Naive thymus-derived CD4-positive, alpha-beta T cell (primary cell): ENCODE measurements at regions of chr2 and their contacts with region 1.

Region 1: GRCh38 chr2:54570925-54571694 is 115.0 kb downstream of the SPTBN1 start:
- DNase-seq: peak in 8 of 9 donors; percentile 61 to 84 (median 68)
- ATAC-seq: peak; percentile 24
- H3K4me3 ChIP-seq: peak overlapping the region; percentile 58
- H3K4me3 Mint-ChIP-seq: peak overlapping the region; percentile 72 to 94 (median 88)
- H3K27ac ChIP-seq: peak overlapping the region; percentile 95
- H3K27ac Mint-ChIP-seq: peak overlapping the region; percentile 90 to 99 (median 97)
- H3K4me1 ChIP-seq: peaks cover 76 to 91% of the 10 kb centered on the region in 2 donors
- H3K4me1 Mint-ChIP-seq: peaks cover 68 to 100% (median 93%) of the 10 kb centered on the region in 7 donors
- H3K27me3 ChIP-seq: no peaks in the 10 kb centered on the region
- H3K27me3 Mint-ChIP-seq: no peaks in the 10 kb centered on the region

Region 2: DNA sequence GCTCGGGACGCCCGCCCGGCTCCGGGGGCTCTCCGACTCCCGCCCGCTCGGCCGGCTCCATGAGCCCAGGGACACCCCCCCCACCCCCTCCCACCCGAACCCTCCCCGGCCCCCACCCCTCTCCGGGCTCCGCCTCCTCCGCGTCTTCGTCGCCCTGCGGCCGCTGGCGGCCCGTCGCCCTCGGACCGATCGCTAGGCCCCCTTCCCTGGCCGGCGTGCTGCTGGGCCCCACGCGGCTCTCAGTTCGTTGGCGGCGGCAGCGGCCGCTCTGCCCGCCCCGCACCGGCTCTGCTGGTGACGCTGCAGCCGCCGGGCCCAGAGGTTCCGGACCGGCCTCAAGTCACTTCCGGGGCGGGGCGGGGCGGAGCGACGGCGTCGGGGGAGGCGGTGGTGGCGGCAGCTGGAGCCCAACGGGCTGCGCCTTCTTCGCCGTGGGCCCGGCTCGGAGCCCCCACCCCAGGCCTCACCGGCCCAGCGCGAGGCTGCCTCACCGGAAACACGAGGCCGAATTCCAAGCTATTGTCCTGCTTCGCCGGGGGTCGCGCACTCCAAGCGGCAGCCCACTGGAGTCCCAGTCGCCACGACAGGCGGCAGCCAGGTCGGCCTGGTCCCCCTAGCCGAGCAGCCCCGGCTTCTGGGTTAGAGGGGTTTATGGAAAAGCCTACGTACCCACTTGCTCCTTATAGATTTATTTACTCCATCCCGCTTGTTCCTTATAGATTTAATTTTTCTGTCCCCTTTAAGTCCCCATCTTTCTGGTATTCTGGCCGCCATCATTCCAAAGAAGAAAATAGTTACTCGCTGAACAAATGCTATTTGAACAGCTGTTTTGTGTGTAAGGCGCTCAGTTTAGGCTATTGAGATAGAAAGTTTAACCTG is 600.1 kb before region 1 on chr2 and contains the start of gene PSME4:
- CTCF ChIA-PET with region 1: no interaction called
- POLR2A ChIA-PET with region 1: no interaction called
- intact Hi-C with region 1: loop called in 1 of 2 experiments (anchors 5 kb)
- DNase-seq: peak; percentile 80 to 95 (median 90)
- ATAC-seq: peak; percentile 97
- H3K4me3 ChIP-seq: peak within 1 kb of the TSS; percentile 84
- H3K4me3 Mint-ChIP-seq: peak within 1 kb of the TSS; percentile 89 to 100 (median 96)
- H3K27ac ChIP-seq: peak within 1 kb of the TSS; percentile 93
- H3K27ac Mint-ChIP-seq: peak within 1 kb of the TSS; percentile 91 to 99 (median 95)
- H3K4me1 ChIP-seq: peaks cover 17 to 21% of the 10 kb centered on the region in 2 donors
- H3K4me1 Mint-ChIP-seq: peaks cover 37 to 65% (median 54%) of the 10 kb centered on the region in 7 donors
- H3K27me3 ChIP-seq: no peaks in the 10 kb centered on the region
- H3K27me3 Mint-ChIP-seq: no peaks in the 10 kb centered on the region
- total RNA-seq, gene PSME4: 48.8 to 80.1 (median 54.4) TPM

Region 3: DNA sequence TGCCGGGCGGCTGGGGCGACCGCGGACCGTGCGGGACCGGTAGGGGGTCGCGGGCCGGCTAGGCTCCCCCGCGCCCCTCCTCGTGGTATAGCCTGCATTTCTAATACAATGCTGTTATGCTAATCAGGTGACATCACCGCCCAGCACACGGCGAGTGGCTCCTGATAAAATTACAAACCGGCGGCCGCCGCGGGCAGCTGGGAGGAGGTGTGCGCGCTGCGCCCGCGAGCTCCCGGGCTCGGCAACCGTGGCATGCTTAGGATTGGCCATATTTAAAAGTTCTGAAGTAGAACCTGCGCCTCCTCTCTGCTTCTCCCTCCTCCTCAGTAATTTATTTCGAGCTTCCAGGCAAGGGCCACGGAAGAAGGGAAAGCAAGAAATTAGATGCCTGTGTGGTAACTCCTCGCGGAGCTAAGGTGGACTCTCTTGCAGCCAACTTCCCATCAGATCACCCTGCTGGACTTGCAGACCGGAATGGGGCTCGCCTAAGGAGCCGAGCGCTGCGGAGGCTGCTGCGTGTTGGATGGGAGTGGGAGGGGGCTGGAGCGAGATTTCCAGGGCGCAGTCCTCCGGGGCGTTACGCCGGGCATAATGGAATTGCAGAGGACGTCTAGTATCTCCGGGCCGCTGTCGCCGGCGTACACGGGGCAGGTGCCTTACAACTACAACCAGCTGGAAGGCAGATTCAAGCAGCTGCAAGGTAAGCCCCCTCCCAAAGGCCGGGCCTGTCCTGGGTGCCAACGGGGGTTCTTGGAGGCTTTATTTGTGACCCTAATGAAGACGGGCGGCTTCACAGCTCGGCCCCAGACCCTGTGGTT is 12.7 kb before region 1 on chr2:
- CTCF ChIA-PET with region 1: interaction called, 23 read pairs
- POLR2A ChIA-PET with region 1: interaction called, 276 read pairs
- intact Hi-C with region 1: loop called (anchors 1 kb)
- DNase-seq: peak; percentile 48 to 75 (median 64)
- ATAC-seq: peak; percentile 82
- H3K4me3 ChIP-seq: peak overlapping the region; percentile 94
- H3K4me3 Mint-ChIP-seq: peak overlapping the region; percentile 86 to 100 (median 98)
- H3K27ac ChIP-seq: peak overlapping the region; percentile 86
- H3K27ac Mint-ChIP-seq: peak overlapping the region; percentile 90 to 98 (median 96)
- H3K4me1 ChIP-seq: peaks cover 10 to 11% of the 10 kb centered on the region in 2 donors
- H3K4me1 Mint-ChIP-seq: peaks cover 29 to 65% (median 59%) of the 10 kb centered on the region in 7 donors
- H3K27me3 ChIP-seq: no peaks in the 10 kb centered on the region
- H3K27me3 Mint-ChIP-seq: no peaks in the 10 kb centered on the region

Region 4: GRCh38 chr2:54597153-54597848 is 26.2 kb after region 1 on chr2:
- CTCF ChIA-PET with region 1: interaction called, 5 read pairs
- POLR2A ChIA-PET with region 1: interaction called, 223 read pairs
- intact Hi-C with region 1: loop called (anchors 1 kb)
- DNase-seq: no peak
- ATAC-seq: peak; percentile 39
- H3K4me3 ChIP-seq: peak overlapping the region; percentile 16
- H3K4me3 Mint-ChIP-seq: peak overlapping the region; percentile 79 to 93 (median 86)
- H3K27ac ChIP-seq: peak overlapping the region; percentile 79
- H3K27ac Mint-ChIP-seq: peak overlapping the region; percentile 86 to 98 (median 97)
- H3K4me1 ChIP-seq: peaks cover 41 to 90% of the 10 kb centered on the region in 2 donors
- H3K4me1 Mint-ChIP-seq: peaks cover 59 to 100% (median 97%) of the 10 kb centered on the region in 7 donors
- H3K27me3 ChIP-seq: no peaks in the 10 kb centered on the region
- H3K27me3 Mint-ChIP-seq: no peaks in the 10 kb centered on the region

Region 5: GRCh38 chr2:54618646-54619565 is 47.8 kb after region 1 on chr2:
- CTCF ChIA-PET with region 1: interaction called, 4 read pairs
- POLR2A ChIA-PET with region 1: interaction called, 5 read pairs
- intact Hi-C with region 1: loop called in 1 of 2 experiments (anchors 1 kb)
- DNase-seq: peak in 1 of 9 donors; percentile 32
- ATAC-seq: no peak
- H3K4me3 ChIP-seq: no peak overlapping the region
- H3K4me3 Mint-ChIP-seq: peak overlapping the region in 8 of 10 donors; percentile 8 to 76 (median 47)
- H3K27ac ChIP-seq: peak overlapping the region; percentile 25
- H3K27ac Mint-ChIP-seq: peak overlapping the region; percentile 25 to 88 (median 79)
- H3K4me1 ChIP-seq: peaks cover 0 to 11% of the 10 kb centered on the region in 2 donors
- H3K4me1 Mint-ChIP-seq: peaks cover 19 to 65% (median 45%) of the 10 kb centered on the region in 7 donors
- H3K27me3 ChIP-seq: no peaks in the 10 kb centered on the region
- H3K27me3 Mint-ChIP-seq: no peaks in the 10 kb centered on the region

Region 6: DNA sequence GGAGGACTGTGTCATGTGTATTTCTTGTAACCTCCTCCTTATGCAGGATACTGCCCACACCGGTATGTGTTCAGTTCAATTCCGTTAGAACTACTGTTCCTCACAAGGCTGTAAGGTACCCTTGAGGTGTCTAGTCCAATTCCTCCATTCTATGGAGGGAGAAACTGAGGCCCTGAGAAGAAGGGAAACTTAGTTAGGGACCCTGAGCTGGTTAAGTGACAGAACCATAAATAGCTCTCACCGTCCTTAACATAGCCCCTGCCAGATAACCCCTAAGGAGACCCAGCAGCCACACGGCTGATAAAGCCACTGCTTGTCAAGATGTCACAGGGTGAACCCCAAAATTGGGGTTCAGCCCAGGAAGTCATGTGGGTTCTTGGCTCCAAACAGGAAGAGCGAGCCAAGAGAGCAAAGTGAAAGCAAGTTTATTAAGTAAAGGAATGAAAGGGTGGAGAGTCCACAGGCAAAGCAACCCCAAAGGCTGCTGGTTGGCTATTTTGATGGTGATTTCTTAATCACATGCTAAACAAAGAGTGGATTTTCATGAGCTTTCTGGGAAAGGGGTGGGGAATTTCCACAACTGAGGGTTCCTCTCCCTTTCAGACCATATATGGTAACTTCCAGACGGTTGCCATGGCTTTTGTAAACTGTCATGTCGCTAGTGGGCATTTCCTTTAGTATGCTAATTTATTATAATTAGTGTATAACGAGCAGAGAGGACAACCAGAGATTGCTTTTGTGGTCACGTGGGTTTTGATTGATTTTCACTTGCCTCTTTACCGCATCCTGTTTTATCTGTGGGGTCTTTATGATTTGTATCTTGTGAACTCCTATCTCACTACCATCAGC is 562.6 kb after region 1 on chr2:
- CTCF ChIA-PET with region 1: no interaction called
- POLR2A ChIA-PET with region 1: no interaction called
- intact Hi-C with region 1: loop called in 1 of 2 experiments (anchors 10 kb)
- DNase-seq: peak; percentile 17 to 78 (median 52)
- ATAC-seq: peak; percentile 91
- H3K4me3 ChIP-seq: peak overlapping the region; percentile 55
- H3K4me3 Mint-ChIP-seq: peak overlapping the region; percentile 83 to 94 (median 88)
- H3K27ac ChIP-seq: peak overlapping the region; percentile 76
- H3K27ac Mint-ChIP-seq: peak overlapping the region; percentile 91 to 98 (median 97)
- H3K4me1 ChIP-seq: peaks cover 14 to 22% of the 10 kb centered on the region in 2 donors
- H3K4me1 Mint-ChIP-seq: peaks cover 19 to 49% (median 39%) of the 10 kb centered on the region in 7 donors
- H3K27me3 ChIP-seq: no peaks in the 10 kb centered on the region
- H3K27me3 Mint-ChIP-seq: no peaks in the 10 kb centered on the region

Region 7: DNA sequence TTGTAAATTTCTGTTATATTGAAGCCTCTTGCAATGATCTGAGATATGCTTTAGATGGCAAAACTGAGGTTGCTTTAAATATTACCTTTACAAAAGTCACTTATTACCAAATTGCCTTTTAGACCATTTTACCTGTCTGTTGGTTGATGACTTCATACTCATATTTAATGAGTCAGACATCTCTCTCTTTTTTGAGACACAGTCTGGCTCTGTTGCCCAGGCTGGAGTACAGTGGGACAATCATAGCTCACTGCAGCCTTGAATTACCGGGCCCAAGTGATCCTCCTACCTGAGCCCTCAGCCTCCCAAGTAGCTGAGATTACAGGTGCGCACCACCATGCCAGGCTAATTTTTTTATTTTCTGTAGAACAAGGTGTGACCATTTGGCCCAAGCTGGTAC is 1057.8 kb after region 1 on chr2:
- CTCF ChIA-PET with region 1: no interaction called
- POLR2A ChIA-PET with region 1: no interaction called
- intact Hi-C with region 1: no loop called
- DNase-seq: no peak
- ATAC-seq: no peak
- H3K4me3 ChIP-seq: no peak overlapping the region
- H3K4me3 Mint-ChIP-seq: no peak overlapping the region
- H3K27ac ChIP-seq: no peak overlapping the region
- H3K27ac Mint-ChIP-seq: peak overlapping the region in 3 of 9 donors; percentile 3 to 10 (median 9)
- H3K4me1 ChIP-seq: peaks cover under 1 to 5% of the 10 kb centered on the region in 2 donors
- H3K4me1 Mint-ChIP-seq: peaks cover 16 to 54% (median 39%) of the 10 kb centered on the region in 7 donors
- H3K27me3 ChIP-seq: no peaks in the 10 kb centered on the region
- H3K27me3 Mint-ChIP-seq: no peaks in the 10 kb centered on the region